ENCODE measurements at regions of chr17 and their contacts with region 1.

Region 1: DNA sequence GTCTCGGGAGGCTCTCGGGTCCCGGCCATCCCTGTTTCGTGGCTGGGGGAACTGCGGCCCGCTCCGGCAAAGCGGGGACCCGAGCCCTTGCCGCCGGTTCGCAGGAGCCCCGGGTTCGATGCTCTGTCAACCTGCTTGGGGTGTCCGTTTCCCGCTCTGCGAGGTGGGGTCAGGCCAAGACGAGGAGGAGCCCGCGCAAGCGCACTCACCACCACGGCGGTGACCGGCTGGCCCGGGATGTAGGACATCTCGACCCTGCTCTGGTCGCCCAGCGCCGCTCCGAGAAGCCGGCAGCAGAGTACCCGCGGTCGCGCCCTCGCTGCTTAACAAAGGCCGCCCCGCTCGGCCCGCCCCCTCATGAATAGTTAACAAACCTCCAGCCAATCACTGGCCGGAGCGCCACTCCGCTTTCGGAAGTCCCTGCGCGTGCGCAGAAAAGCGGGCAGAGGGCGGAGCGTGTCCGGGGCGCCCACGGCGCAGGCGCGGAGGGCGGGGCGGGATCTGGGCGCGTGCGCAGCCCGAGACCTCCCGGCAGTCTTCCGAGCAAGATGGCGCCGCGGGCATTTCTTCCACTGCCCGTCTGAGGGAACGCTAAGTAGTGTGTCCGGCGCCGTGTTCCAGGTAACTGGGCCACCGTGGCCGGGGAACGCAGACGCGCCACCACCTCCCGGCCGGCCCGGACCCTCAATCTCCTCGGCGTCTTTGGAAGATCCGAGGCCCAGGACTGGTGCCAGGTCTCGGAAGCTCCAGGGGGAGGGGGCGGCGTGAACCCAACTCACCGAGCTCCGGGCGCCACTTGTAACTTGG is at the starts of genes EMC6 and TAX1BP3:
- DNase-seq: peak; percentile 98 to 99 (median 99)
- H3K4me3 ChIP-seq: peak within 1 kb of the TSS; percentile 66 to 100 (median 97)
- H3K27ac ChIP-seq: peak within 1 kb of the TSS; percentile 69 to 99 (median 95)
- H3K27me3 ChIP-seq: no peaks in the 10 kb centered on the region
- CTCF ChIP-seq: peak in 18 of 56 donors; percentile 4 to 53 (median 26)
- total RNA-seq, gene EMC6: 13.3 to 35.5 (median 25.3) TPM
- total RNA-seq, gene TAX1BP3: 19.0 to 75.8 (median 38.4) TPM

Region 2: DNA sequence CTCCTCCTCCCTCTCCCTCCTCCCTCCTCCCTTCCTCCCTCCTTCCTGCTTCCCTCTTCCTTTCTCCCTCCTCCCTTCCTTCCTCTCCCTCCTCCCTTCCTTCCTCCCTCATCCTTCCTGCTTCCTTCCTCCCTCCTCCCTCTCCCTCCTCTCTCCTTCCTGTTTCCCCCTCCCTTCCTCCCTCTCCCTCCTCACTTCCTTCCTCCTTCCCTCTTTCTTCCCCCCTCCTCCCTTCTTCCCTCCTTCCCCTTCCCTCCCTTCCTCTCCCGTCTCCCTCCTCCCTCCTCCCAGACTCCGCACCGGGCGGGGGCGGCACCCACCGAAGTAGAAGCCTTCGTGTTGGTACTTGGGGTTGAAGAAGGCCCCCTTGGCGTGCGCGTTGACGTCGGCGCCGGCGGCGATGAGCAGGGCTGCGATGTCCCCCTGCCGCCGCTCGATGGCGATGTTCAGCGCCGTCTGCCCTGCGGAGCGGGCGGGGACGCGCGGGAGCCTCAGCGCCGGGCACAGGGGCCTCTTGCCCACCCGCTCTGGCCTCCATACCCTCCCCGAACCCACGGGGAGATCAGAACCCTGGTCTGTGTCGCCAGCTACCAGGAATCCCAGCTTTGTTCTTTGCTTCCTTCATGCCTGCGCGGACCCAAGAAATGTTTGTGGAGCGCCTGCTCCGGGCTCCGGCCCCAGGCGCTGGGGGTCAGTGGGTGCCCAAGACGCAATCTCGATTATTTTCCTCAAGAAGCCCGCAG is 133.1 kb before region 1 on chr17:
- intact Hi-C with region 1: loop called (anchors 5 to 10 kb)
- DNase-seq: peak in 9 of 10 donors; percentile 60 to 85 (median 78)
- H3K4me3 ChIP-seq: peak overlapping the region; percentile 24 to 76 (median 68)
- H3K27ac ChIP-seq: peak overlapping the region; percentile 32 to 100 (median 96)
- H3K27me3 ChIP-seq: no peaks in the 10 kb centered on the region
- CTCF ChIP-seq: peak; percentile 42 to 90 (median 78)

Region 3: GRCh38 chr17:3636154-3636907 is 32.2 kb before region 1 on chr17 and contains the starts of genes CTNS and SHPK:
- intact Hi-C with region 1: loop called in 1 of 2 experiments (anchors 2 kb)
- DNase-seq: peak; percentile 95 to 99 (median 98)
- H3K4me3 ChIP-seq: peak within 1 kb of the TSS; percentile 66 to 100 (median 97)
- H3K27ac ChIP-seq: peak within 1 kb of the TSS; percentile 86 to 100 (median 98)
- H3K27me3 ChIP-seq: no peaks in the 10 kb centered on the region
- CTCF ChIP-seq: peak in 17 of 56 donors; percentile 3 to 45 (median 27)
- total RNA-seq, gene CTNS: 5.0 to 16.5 (median 9.6) TPM
- total RNA-seq, gene SHPK: 7.4 to 28.1 (median 15.1) TPM

Region 4: GRCh38 chr17:3723556-3724369 is 55.3 kb after region 1 on chr17 and contains the start of gene HASPIN:
- intact Hi-C with region 1: loop called (anchors 2 to 5 kb)
- DNase-seq: peak; percentile 72 to 93 (median 82)
- H3K4me3 ChIP-seq: peak within 1 kb of the TSS; percentile 64 to 100 (median 93)
- H3K27ac ChIP-seq: peak within 1 kb of the TSS in 57 of 59 donors; percentile 46 to 95 (median 83)
- H3K27me3 ChIP-seq: no peaks in the 10 kb centered on the region
- CTCF ChIP-seq: peak in 46 of 56 donors; percentile 1 to 69 (median 40)
- total RNA-seq, gene HASPIN: 0.13 to 0.31 (median 0.18) TPM in 26 of 120 experiments, not detected in the others